ENCODE measurements at regions of chr10 and their contacts with region 1.

Region 1: DNA sequence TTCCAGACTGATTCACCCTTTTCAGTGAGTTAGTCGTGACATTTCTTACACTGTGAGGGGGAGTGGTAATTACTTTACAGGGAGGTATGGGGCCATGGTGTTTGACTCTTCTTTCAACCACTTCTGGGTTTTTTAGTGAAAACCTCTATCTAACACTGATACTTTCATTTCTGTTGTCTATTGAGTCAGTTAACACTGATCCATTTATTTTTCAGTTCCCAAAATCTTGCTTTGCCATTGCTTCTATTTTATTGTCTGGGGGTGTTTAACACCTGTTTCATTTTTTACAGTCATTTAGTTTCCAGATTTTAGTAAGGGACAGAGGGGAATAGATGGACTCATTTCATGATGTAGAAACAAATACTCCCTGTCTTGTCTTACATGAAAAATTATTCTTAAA is 61.5 kb downstream of the HELLS start:
- DNase-seq: peak; percentile 10
- H3K4me3 Mint-ChIP-seq: no peak overlapping the region
- H3K27ac Mint-ChIP-seq: peak overlapping the region; percentile 82
- H3K4me1 Mint-ChIP-seq: peaks cover 17% of the 10 kb centered on the region
- H3K27me3 Mint-ChIP-seq: no peaks in the 10 kb centered on the region

Region 2: DNA sequence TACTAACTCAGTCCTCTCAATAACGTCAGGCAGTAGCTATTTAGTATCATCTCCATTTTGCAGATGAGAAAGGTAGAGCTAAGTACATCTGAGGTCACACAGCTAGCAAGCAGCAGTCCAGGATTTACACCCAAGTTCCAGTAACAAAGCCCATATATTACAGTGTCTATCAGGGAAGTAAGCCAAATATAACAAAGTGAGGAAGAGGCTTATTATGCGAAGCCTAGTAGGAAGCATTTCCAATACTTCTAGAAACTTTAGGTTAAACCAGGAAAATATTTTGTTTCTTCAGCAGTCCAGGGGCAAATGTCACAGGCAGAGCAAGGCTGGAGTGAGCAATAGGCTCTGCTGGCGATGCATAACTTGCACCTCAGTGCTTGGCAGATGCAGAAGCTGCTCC is 298.2 kb before region 1 on chr10:
- CTCF ChIA-PET with region 1: no interaction called
- intact Hi-C with region 1: no loop called
- DNase-seq: no peak
- H3K4me3 Mint-ChIP-seq: no peak overlapping the region
- H3K27ac Mint-ChIP-seq: no peak overlapping the region
- H3K4me1 Mint-ChIP-seq: no peaks in the 10 kb centered on the region
- H3K27me3 Mint-ChIP-seq: peaks cover 46% of the 10 kb centered on the region

Region 3: GRCh38 chr10:94591461-94592205 is 15.5 kb before region 1 on chr10:
- CTCF ChIA-PET with region 1: no interaction called
- intact Hi-C with region 1: loop called (anchors 1 kb)
- DNase-seq: no peak
- H3K4me3 Mint-ChIP-seq: no peak overlapping the region
- H3K27ac Mint-ChIP-seq: peak overlapping the region; percentile 50
- H3K4me1 Mint-ChIP-seq: peaks cover 9% of the 10 kb centered on the region
- H3K27me3 Mint-ChIP-seq: no peaks in the 10 kb centered on the region

Region 4: DNA sequence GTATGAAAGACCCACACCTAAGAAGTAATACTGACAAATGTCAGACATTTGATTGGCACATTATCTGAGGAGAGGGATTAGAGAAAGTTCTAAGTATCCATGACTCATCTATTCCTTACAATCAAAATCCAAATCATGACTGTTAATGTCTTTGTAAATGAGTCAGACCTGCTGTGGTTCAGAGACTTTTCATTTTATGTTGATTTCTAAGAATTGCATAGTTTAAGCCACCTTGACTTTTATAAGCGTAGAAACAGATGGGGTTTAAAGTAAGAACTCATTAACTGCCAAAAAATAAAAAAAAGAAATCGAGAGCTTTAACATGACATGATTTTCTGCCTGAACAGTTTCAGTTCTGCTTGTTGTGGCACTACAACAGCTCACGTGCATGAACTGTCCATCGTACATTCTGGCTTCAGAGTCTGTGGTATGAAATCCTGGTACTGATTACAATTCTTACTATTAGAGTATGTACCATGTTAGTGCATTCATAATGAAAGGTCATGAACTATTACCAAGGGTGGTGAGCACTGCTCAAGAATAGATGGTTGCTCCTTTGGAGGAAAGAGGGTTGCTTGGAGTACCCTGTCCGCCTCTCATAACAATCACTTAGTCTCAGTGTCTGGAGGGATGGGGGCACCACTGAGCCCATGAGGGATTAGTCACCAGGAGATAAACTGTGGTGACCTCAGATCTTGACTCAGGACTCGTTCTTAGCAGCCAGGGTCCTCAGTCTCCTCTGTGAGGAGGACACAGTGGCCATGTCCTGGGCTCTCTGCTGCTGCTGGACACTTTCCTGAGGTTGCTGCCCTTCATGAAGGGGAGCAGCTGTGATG is 629.2 kb after region 1 on chr10:
- CTCF ChIA-PET with region 1: no interaction called
- intact Hi-C with region 1: loop called (anchors 1 kb)
- DNase-seq: peak; percentile 26
- H3K4me3 Mint-ChIP-seq: no peak overlapping the region
- H3K27ac Mint-ChIP-seq: peak overlapping the region; percentile 75
- H3K4me1 Mint-ChIP-seq: peaks cover 19% of the 10 kb centered on the region
- H3K27me3 Mint-ChIP-seq: peaks cover 20% of the 10 kb centered on the region